Activated T-helper 2 cell treated with anti-CD3 and anti-CD28 coated beads, Interferon-gamma antibody, Interleukin-2, Interleukin-4, amounts not matched to agents 10 μg/mL and 5 μg/mL and 100 μg/mL, durations not matched to agents 14 hours and 24 hours and 36 hours (primary cell): ENCODE measurements at regions of chr2 and their contacts with region 1.

Region 1: DNA sequence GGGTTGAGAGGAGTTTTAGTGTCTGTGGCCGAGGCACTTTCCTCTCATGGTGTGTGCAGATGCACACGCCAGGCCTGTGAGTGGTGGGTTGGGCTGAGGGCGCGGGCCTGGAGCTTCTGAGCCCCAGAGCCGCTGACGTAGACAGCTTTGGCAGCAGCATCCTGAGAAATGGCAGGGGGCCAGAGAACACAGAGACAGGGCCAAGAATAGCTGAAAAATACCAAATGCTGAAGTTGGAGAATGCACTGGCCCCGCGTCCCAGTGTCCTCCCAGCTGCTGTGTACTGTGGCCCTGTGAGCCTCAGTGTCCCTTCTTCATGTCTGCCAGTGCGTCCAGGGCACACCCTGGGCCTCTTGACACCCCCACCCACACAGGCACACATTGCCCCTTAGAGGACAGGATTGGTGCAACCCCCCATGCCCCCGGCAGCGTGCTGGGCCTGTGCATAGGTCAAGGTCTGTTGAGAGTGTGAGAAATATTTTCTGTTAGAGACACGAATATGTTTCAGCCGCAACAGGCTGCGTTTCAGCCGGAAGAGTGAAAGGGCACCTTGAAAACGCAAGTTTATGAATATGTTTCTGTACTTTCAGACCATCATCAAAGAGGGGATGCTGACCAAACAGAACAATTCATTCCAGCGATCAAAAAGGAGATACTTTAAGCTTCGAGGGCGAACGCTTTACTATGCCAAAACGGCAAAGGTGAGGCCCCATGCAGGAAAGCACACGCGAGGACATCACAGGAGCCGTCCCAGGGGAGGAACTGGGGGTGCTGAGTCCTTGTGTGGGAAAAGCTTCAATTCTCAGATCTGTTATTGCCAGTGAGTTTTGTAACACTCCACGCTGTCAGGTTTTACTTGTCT is 33.6 kb downstream of the DGKD start:
- DNase-seq: no peak
- H3K4me3 Mint-ChIP-seq: no peak overlapping the region
- H3K27ac Mint-ChIP-seq: no peak overlapping the region
- H3K4me1 Mint-ChIP-seq: peaks cover 40% of the 10 kb centered on the region
- H3K27me3 Mint-ChIP-seq: no peaks in the 10 kb centered on the region

Region 2: DNA sequence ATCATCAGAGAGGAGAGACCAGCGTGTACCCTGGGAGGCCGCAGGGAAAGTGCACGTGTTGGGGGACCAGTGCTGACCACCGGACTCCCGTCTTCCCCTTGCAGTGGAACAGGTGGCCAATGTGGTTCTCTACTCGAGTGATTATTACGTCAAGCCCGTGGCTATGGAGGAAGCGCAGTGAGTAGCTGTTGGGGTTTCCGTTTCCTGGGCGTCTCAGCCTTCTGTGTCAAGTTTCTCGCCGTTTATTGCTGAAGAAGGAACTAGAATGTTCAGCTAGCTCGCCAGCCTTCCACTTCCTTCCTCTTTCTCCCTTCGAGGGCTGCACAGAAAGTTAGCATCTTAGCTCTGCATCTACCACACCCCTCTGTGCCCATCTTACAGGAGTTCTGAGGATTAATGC is 56.4 kb before region 1 on chr2:
- intact Hi-C with region 1: loop called (anchors 2 kb)
- DNase-seq: peak; percentile 73
- H3K4me3 Mint-ChIP-seq: peak overlapping the region; percentile 38
- H3K27ac Mint-ChIP-seq: peak overlapping the region; percentile 92
- H3K4me1 Mint-ChIP-seq: peaks cover 22% of the 10 kb centered on the region
- H3K27me3 Mint-ChIP-seq: peaks cover 1% of the 10 kb centered on the region

Region 3: GRCh38 chr2:233349005-233349998 is 38.6 kb before region 1 on chr2:
- intact Hi-C with region 1: no loop called
- DNase-seq: no peak
- H3K4me3 Mint-ChIP-seq: no peak overlapping the region
- H3K27ac Mint-ChIP-seq: no peak overlapping the region
- H3K4me1 Mint-ChIP-seq: peaks cover 31% of the 10 kb centered on the region
- H3K27me3 Mint-ChIP-seq: peaks cover 5% of the 10 kb centered on the region